PC-3 (cell line): ENCODE measurements at regions of chr16 and their contacts with region 1.

Region 1: GRCh38 chr16:57167953-57168352 is 17.9 kb downstream of the PSME3IP1 start:
- DNase-seq: peak; percentile 57
- ATAC-seq: peak; percentile 63
- H3K4me3 ChIP-seq: no peak overlapping the region
- H3K27ac ChIP-seq: no peak overlapping the region
- H3K4me1 ChIP-seq: no peaks in the 10 kb centered on the region
- H3K27me3 ChIP-seq: no peaks in the 10 kb centered on the region
- CTCF ChIP-seq: peak; percentile 71

Region 2: DNA sequence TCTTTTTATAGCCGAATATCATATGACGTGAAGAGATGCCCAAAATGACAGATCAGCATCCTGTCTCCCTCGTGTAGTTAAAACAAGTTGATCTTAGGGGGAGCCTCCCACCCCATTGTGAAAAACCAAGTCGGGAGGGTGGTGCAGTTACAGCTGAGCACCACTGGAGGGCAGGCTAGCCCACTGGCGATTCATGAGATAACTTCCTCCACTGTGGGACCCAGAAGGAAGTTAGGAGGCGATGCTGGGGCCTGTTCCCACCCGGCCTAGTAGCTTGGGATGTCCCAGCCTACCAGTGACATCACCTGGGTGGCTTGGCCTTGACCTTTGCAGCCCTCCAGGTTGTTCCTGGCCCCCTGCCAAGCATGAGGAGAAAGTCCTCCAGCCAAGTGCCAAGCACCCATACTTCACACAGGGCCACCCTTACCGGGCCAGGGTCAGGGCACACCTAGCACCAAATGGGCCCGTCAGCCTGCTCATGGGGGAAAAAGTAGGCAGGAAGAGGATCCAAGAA is 83.6 kb before region 1 on chr16:
- CTCF ChIA-PET with region 1: no interaction called
- POLR2A ChIA-PET with region 1: no interaction called
- intact Hi-C with region 1: loop called (anchors 1 kb)
- DNase-seq: peak; percentile 71
- ATAC-seq: peak; percentile 58
- H3K4me3 ChIP-seq: no peak overlapping the region
- H3K27ac ChIP-seq: no peak overlapping the region
- H3K4me1 ChIP-seq: no peaks in the 10 kb centered on the region
- H3K27me3 ChIP-seq: no peaks in the 10 kb centered on the region
- CTCF ChIP-seq: peak; percentile 87

Region 3: DNA sequence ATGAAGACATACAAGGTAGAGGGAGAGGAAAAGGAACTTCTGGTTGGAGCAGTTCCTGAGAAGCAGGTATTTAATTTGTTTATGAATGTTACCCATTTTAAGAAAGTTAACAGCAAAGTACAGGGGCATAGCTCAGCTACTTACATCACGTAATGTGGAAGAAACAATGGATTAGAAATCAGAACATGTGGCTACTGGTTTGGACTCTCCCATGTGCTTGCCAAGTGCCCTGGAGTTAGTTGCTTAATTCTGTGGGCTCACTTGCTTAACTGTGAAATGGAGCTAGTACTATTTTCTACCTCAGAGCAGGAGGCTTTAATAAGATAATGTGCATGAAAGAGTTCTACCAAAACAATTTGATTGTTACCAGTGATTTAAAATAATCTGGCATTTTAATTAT is 45.5 kb after region 1 on chr16:
- CTCF ChIA-PET with region 1: no interaction called
- POLR2A ChIA-PET with region 1: no interaction called
- intact Hi-C with region 1: no loop called
- DNase-seq: no peak
- ATAC-seq: no peak
- H3K4me3 ChIP-seq: no peak overlapping the region
- H3K27ac ChIP-seq: no peak overlapping the region
- H3K4me1 ChIP-seq: no peaks in the 10 kb centered on the region
- H3K27me3 ChIP-seq: no peaks in the 10 kb centered on the region
- CTCF ChIP-seq: no peak